Caco-2 (cell line): ENCODE measurements at regions of chr2 and their contacts with region 1.

Region 1: GRCh38 chr2:219155054-219155644 is 5.5 kb downstream of the NHEJ1 start:
- DNase-seq: peak; percentile 60 to 83
- H3K4me3 ChIP-seq: no peak overlapping the region
- H3K4me3 Mint-ChIP-seq: no peak overlapping the region
- H3K27ac Mint-ChIP-seq: no peak overlapping the region
- H3K4me1 ChIP-seq: 0 out of 2 replicates have a peak, but pooled peaks cover 4% of the 10 kb centered on the region
- H3K4me1 Mint-ChIP-seq: peaks cover 5% of the 10 kb centered on the region
- H3K27me3 ChIP-seq: no peaks in the 10 kb centered on the region
- H3K27me3 Mint-ChIP-seq: no peaks in the 10 kb centered on the region
- CTCF ChIP-seq: peak; percentile 59 to 85

Region 2: DNA sequence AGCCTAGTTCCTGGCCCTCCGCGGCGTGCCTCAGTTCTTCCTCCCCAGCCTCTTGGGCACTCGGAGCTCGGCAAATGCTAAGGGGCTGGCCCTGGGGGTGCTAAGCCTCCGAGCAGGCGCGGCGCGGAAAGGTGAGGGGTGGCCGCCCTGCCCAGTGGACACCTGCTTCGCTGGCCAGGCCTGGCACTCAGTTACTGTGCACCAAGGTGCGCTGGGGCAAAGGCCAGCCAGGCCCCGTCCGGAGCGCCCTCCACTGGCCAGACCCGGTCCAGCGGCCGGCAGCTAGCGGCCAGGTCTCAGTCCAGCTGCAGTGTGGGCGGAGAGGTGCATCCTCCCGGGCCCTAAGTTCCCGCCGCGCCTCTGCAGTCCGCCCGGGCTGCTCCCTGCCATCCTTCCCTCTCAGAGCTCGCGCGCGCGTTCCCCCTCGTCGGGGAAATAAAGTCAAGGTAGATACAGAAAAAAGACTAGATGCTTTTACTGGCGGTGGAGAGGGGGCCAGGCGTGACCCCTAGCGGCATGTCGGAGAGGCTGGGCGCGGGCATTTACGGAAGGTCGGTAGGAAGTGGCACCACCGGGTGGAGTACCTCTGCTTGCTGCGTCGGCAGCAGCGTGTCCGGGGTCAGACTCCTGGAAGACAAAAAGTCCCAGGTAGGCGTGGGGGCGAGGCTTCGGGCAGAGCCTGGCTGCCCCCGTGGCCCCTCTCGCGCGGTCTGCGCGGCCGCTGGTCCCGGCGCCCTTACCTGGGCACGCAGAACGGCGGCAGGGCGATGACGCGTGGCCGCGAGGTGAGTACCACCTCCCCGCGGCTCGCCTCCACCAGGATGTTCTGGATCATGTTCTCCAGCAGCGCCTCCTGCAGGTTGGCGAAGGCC is 152.5 kb before region 1 on chr2:
- CTCF ChIA-PET with region 1: interaction called, 10 read pairs
- POLR2A ChIA-PET with region 1: interaction called, 3 read pairs
- intact Hi-C with region 1: no loop called
- DNase-seq: peak in 1 of 2 experiments; percentile 85
- H3K4me3 ChIP-seq: peak overlapping the region; percentile 67
- H3K4me3 Mint-ChIP-seq: peak overlapping the region; percentile 79
- H3K27ac Mint-ChIP-seq: no peak overlapping the region
- H3K4me1 ChIP-seq: peaks cover 25% of the 10 kb centered on the region
- H3K4me1 Mint-ChIP-seq: peaks cover 15% of the 10 kb centered on the region
- H3K27me3 ChIP-seq: no peaks in the 10 kb centered on the region
- H3K27me3 Mint-ChIP-seq: peaks cover 7% of the 10 kb centered on the region
- CTCF ChIP-seq: peak; percentile 48 to 77

Region 3: GRCh38 chr2:219073413-219074129 is 81.6 kb before region 1 on chr2:
- CTCF ChIA-PET with region 1: interaction called, 15 read pairs
- POLR2A ChIA-PET with region 1: no interaction called
- intact Hi-C with region 1: loop called (anchors 1 kb)
- DNase-seq: peak; percentile 77 to 78
- H3K4me3 ChIP-seq: no peak overlapping the region
- H3K4me3 Mint-ChIP-seq: peak overlapping the region; percentile 59
- H3K27ac Mint-ChIP-seq: peak overlapping the region; percentile 72
- H3K4me1 ChIP-seq: peaks cover 48% of the 10 kb centered on the region
- H3K4me1 Mint-ChIP-seq: peaks cover 46% of the 10 kb centered on the region
- H3K27me3 ChIP-seq: no peaks in the 10 kb centered on the region
- H3K27me3 Mint-ChIP-seq: no peaks in the 10 kb centered on the region
- CTCF ChIP-seq: peak; percentile 65 to 79

Region 4: DNA sequence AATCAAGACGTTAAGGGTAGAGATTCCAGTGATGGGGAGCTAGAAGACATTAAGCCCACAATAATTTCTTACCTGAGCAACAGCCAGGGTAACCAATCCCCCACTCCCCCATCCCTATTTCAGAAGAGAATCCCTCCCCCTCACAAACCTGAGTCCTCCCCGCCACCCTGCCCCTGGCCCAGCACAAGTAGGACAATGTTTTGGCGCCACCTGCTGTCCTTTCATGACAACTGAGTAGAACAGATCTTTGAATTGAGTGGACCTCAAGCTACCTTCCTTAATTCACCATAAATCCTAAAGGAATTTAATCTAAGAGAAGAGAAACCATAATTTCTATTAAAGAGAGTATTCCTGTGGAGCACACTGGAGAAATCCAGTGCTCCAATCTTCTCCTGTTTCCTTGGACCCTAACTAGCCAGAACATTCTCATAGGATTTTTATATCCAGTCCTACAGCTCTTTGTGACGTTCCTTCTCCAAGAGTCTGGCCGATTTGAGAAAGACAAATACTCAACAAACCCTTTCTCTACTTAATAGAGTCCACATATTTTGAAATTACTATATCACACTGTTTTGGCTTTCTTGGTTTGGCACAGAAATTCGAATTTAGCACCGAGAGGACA is 35.6 kb before region 1 on chr2:
- CTCF ChIA-PET with region 1: interaction called, 23 read pairs
- POLR2A ChIA-PET with region 1: no interaction called
- intact Hi-C with region 1: loop called (anchors 1 kb)
- DNase-seq: peak; percentile 77 to 80
- H3K4me3 ChIP-seq: no peak overlapping the region
- H3K4me3 Mint-ChIP-seq: no peak overlapping the region
- H3K27ac Mint-ChIP-seq: no peak overlapping the region
- H3K4me1 ChIP-seq: peaks cover 36% of the 10 kb centered on the region
- H3K4me1 Mint-ChIP-seq: peaks cover 44% of the 10 kb centered on the region
- H3K27me3 ChIP-seq: no peaks in the 10 kb centered on the region
- H3K27me3 Mint-ChIP-seq: no peaks in the 10 kb centered on the region
- CTCF ChIP-seq: peak; percentile 84 to 89